ENCODE measurements at regions of chr2 and their contacts with region 1.

Region 1: GRCh38 chr2:152861349-152861942 is 143.0 kb downstream of the ARL6IP6 start:
- DNase-seq: peak; percentile 5 to 63
- H3K4me3 ChIP-seq: no peak overlapping the region
- H3K27ac ChIP-seq: no peak overlapping the region
- H3K4me1 ChIP-seq: peaks cover 0 to 3% (median 0%) of the 10 kb centered on the region in 4 experiments; a peak in 1 of 7 replicates
- H3K27me3 ChIP-seq: no peaks in the 10 kb centered on the region
- CTCF ChIP-seq: peak; percentile 8 to 85 (median 57)
- EP300 ChIP-seq: no peak
- POLR2A ChIP-seq: no peak
- RAD21 ChIP-seq: peak; percentile 48 to 62

Region 2: DNA sequence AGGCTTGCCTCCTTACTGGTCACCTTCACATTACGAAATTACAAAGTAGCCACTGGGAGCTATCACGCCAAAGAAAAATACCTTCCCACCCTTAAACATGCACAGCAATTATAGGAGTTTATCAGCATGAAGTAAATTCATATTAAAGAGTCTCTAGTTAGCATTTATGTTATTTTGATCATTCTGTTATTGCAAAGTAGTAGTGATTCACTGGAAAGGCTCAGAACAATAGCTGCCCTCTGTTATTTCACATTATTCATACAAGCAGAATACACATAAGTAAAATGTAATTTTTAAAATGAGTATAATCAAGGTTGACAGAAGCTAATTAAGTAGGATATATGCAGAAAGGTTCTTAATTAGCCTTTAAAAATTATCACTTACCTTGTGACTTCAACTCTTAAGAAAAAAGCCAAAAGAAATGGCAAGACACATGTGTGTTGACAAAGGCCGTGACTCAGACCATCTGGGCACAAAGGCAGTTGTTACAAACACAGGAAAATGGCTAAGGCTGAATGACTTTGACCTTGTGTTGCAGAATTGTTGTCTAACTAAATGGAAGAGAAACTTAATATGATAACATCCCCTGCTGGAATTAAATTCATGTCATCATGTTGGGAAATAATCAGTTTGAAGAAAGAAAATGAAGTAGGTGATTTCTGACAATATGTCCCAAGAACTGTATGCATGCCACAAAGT is 34.7 kb before region 1 on chr2:
- CTCF ChIA-PET with region 1: interaction called, 21 read pairs
- POLR2A ChIA-PET with region 1: no interaction called
- DNase-seq: peak in 1 of 2 experiments; percentile 7
- H3K4me3 ChIP-seq: no peak overlapping the region
- H3K27ac ChIP-seq: no peak overlapping the region
- H3K4me1 ChIP-seq: peaks cover 0 to 3% (median under 1%) of the 10 kb centered on the region in 4 experiments; a peak in 2 of 7 replicates
- H3K27me3 ChIP-seq: no peaks in the 10 kb centered on the region
- CTCF ChIP-seq: no peak
- EP300 ChIP-seq: no peak
- POLR2A ChIP-seq: no peak
- RAD21 ChIP-seq: no peak

Region 3: GRCh38 chr2:152846697-152847470 is 14.6 kb before region 1 on chr2:
- CTCF ChIA-PET with region 1: interaction called, 41 read pairs
- POLR2A ChIA-PET with region 1: no interaction called
- DNase-seq: no peak
- H3K4me3 ChIP-seq: no peak overlapping the region
- H3K27ac ChIP-seq: no peak overlapping the region
- H3K4me1 ChIP-seq: peaks cover 0 to 3% (median 1%) of the 10 kb centered on the region in 4 experiments; a peak in 2 of 7 replicates
- H3K27me3 ChIP-seq: no peaks in the 10 kb centered on the region; a peak in 1 of 7 replicates
- CTCF ChIP-seq: no peak
- EP300 ChIP-seq: no peak
- POLR2A ChIP-seq: no peak
- RAD21 ChIP-seq: no peak

Region 4: DNA sequence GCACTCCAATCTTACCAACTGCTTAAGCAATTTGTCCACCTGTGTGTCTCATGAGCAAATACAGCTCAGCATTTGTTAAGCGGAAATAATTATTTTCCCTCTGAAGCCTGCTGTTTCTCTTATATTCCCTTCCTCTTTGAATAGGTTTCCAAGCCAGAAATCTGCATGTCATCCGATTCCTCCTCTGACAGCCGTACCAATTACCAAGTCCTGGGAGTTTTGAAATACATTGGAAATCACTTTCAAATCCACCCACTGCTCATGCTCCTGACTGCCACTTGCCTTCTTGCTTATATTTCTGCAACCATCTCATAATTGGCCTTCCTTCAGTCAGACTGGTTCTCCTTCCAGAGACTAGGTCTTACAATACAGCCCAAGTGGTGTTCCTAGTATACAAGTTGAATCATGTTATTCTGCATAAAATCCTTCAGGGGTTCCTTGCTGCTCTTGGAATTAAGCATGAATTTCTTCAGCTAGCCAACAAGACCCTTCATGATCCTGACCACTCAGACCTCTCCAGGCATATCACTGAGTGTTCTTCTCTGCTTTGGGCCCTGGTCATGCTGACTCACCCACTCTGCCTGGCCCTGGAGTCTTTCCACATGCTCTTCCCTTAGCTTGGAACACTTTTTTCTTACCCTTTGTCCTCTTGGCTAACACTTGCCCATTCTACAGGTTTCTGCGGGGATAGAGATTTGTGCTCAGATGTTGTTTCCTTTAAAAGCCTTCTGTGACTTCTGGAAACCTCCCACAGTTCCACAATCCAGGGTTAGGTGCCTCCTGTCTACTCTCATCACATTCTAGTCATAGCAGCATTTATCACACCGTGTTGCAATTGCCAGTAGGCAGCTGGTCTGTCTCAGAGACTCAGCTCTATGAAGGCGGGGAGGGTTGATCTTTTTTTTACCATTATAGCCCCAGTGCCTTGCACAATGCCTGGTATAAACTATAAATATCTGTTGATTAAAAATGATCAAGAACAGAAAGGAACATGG is 14.6 kb after region 1 on chr2:
- CTCF ChIA-PET with region 1: interaction called, 48 read pairs
- POLR2A ChIA-PET with region 1: no interaction called
- DNase-seq: no peak
- H3K4me3 ChIP-seq: no peak overlapping the region
- H3K27ac ChIP-seq: peak overlapping the region; percentile 25; the same call in 1 of the 2 replicates
- H3K4me1 ChIP-seq: no peaks in the 10 kb centered on the region; a peak in 1 of 7 replicates
- H3K27me3 ChIP-seq: no peaks in the 10 kb centered on the region
- CTCF ChIP-seq: no peak
- EP300 ChIP-seq: no peak
- POLR2A ChIP-seq: no peak
- RAD21 ChIP-seq: no peak

Region 5: GRCh38 chr2:152881527-152881926 is 20.1 kb after region 1 on chr2:
- CTCF ChIA-PET with region 1: interaction called, 48 read pairs
- POLR2A ChIA-PET with region 1: no interaction called
- DNase-seq: no peak
- H3K4me3 ChIP-seq: no peak overlapping the region
- H3K27ac ChIP-seq: no peak overlapping the region
- H3K4me1 ChIP-seq: no peaks in the 10 kb centered on the region
- H3K27me3 ChIP-seq: no peaks in the 10 kb centered on the region
- CTCF ChIP-seq: no peak
- EP300 ChIP-seq: no peak
- POLR2A ChIP-seq: no peak
- RAD21 ChIP-seq: no peak

Region 6: GRCh38 chr2:153115141-153115540 is 253.7 kb after region 1 on chr2:
- CTCF ChIA-PET with region 1: no interaction called
- POLR2A ChIA-PET with region 1: no interaction called
- DNase-seq: no peak
- H3K4me3 ChIP-seq: no peak overlapping the region
- H3K27ac ChIP-seq: no peak overlapping the region
- H3K4me1 ChIP-seq: no peaks in the 10 kb centered on the region
- H3K27me3 ChIP-seq: no peaks in the 10 kb centered on the region
- CTCF ChIP-seq: no peak
- EP300 ChIP-seq: no peak
- POLR2A ChIP-seq: no peak
- RAD21 ChIP-seq: no peak